Sigmoid colon (tissue), 7 donors: ENCODE measurements at regions of chr3 and their contacts with region 1.

Region 1: DNA sequence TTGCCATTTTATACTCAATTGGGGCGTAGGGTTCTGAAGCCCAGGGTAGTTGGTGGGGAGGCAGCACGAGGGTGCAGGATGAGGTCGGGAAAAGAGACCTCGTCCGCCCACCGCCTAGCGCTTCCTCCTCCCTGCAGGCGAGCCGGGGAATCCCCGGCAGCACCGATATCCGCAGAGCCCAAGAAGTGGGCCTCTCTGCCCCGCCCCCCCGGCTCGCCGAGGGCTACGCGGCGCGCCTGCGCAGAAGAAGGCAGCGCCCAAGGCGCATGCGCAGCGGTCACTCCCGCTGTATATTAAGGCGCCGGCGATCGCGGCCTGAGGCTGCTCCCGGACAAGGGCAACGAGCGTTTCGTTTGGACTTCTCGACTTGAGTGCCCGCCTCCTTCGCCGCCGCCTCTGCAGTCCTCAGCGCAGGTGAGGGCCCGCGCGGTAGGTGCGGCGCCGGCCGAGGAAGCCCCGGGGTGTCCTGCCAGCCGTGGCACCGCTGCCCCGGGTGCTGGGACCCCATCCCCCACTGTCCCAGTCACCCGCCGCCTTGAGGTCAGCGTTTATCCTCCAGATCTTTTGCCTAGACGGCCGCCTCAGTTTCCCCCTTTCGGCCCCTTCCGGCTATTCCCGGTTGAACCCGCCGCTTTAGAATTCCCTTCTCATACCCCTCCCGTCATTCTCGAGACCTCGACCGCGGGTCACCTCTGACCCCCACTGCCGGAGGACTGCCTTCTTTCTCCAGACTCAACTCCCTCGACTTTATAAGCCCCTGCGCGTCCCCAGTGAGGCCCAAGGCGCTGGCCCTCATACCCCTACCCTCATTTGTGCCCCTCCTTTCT is at the start of gene ALAS1:
- DNase-seq: peak; percentile 95
- H3K4me3 ChIP-seq: peak within 1 kb of the TSS; percentile 88 to 97 (median 91)
- H3K27ac ChIP-seq: peak within 1 kb of the TSS; percentile 86 to 90 (median 88)
- H3K4me1 ChIP-seq: peaks cover 0 to 65% (median 46%) of the 10 kb centered on the region in 4 donors
- H3K27me3 ChIP-seq: no peaks in the 10 kb centered on the region
- CTCF ChIP-seq: peak; percentile 29 to 54 (median 33)
- EP300 ChIP-seq: no peak
- POLR2A ChIP-seq: peak; percentile 58 to 88
- total RNA-seq, gene ALAS1: 23.2 to 27.3 (median 25.8) TPM

Region 2: DNA sequence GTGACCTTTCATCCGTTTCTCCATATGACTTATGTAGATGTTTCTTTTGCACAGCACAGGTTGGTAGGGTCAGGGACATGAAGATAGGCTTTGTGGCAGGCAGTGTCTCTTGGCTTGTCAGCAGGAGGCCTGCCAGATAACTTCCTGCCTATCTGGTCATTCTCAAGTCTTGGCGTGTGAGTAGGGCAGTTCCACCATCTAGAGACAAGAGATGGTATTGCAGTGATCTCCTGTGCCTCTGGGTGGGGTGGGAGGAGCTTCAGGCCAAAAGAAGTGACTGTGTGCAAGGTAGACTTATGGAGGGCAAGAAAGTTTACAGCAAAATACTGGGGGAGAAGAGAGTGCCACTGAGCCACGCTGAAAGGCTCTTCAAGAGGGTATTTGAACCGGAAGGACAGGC is 516.0 kb before region 1 on chr3:
- intact Hi-C with region 1: no loop called
- DNase-seq: peak; percentile 83
- H3K4me3 ChIP-seq: no peak overlapping the region
- H3K27ac ChIP-seq: peak overlapping the region in 2 of 4 donors; percentile 30 to 31
- H3K4me1 ChIP-seq: peaks cover 0 to 30% (median 18%) of the 10 kb centered on the region in 4 donors
- H3K27me3 ChIP-seq: no peaks in the 10 kb centered on the region
- CTCF ChIP-seq: peak; percentile 73 to 83 (median 80)
- EP300 ChIP-seq: no peak
- POLR2A ChIP-seq: no peak

Region 3: GRCh38 chr3:52154117-52155094 is 43.6 kb before region 1 on chr3 and contains the start of gene POC1A:
- intact Hi-C with region 1: loop called (anchors 2 kb)
- DNase-seq: peak; percentile 99
- H3K4me3 ChIP-seq: peak within 1 kb of the TSS; percentile 47 to 65 (median 60)
- H3K27ac ChIP-seq: peak within 1 kb of the TSS; percentile 85 to 92 (median 86)
- H3K4me1 ChIP-seq: peaks cover 0 to 17% (median 14%) of the 10 kb centered on the region in 4 donors
- H3K27me3 ChIP-seq: no peaks in the 10 kb centered on the region
- CTCF ChIP-seq: peak in 3 of 4 experiments; percentile 20 to 40 (median 36)
- EP300 ChIP-seq: peak in 1 of 4 donors; percentile 56
- POLR2A ChIP-seq: peak in 1 of 2 donors; percentile 33
- total RNA-seq, gene POC1A: 0.66 to 1.7 (median 1.2) TPM

Region 4: DNA sequence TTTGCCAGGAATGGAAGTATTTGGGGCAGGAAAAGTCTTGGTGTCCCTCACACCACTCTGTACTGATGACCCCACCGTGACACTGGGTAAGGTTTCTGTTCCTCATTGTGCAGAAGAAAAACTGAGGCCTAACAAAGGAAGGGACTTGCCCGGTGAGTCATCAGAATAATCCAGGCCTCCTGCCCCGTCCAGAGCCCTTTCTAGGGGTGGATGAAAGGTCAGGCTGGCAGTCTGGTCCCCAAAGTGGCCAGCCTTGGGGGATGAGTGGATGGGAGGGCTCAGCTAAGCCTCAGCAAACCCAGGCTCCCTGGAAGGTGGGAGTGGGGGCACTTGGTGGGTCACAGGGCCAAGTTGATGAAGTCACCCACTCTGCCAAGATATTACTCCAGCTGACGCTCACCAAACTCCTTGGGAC is 115.7 kb after region 1 on chr3:
- intact Hi-C with region 1: no loop called
- DNase-seq: no peak
- H3K4me3 ChIP-seq: no peak overlapping the region
- H3K27ac ChIP-seq: peak overlapping the region in 3 of 4 donors; percentile 27 to 49 (median 27)
- H3K4me1 ChIP-seq: peaks cover 0 to 18% (median 11%) of the 10 kb centered on the region in 4 donors
- H3K27me3 ChIP-seq: no peaks in the 10 kb centered on the region
- CTCF ChIP-seq: no peak
- EP300 ChIP-seq: no peak
- POLR2A ChIP-seq: no peak

Region 5: DNA sequence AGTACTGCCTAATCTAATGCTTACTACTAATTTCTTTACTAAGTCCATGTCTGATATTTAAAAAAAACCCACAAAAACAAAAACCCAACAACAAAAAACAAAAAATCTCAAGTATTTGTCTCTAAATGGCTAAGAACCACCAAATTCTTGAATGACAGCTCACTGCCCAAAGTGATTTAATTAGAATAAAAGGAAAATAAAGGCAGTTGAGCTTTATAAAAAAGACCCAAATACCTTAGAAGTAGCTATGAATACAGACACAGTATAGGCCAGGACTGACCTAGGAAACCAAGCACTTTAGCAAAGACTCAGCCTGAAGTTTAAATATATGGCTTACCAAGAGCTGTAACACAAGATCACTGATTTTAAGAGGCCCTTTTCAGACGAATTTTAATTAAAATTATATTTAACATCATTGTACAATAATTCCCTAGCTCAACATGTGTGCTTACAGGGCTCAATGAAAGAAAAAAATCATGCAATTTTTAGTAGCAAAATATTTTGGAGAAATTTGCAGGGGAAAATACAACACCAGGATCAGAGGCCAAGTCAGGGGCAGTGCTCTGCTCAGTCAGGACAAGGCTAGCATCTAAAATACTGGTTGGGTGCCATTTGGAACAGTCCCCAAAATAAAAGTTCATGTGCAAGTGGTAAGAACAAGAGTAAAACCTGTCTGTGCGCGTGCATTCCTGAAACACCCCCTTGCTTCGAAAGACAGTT is 363.1 kb after region 1 on chr3:
- intact Hi-C with region 1: no loop called
- DNase-seq: no peak
- H3K4me3 ChIP-seq: no peak overlapping the region
- H3K27ac ChIP-seq: no peak overlapping the region
- H3K4me1 ChIP-seq: peaks cover 0 to 16% (median 11%) of the 10 kb centered on the region in 4 donors
- H3K27me3 ChIP-seq: no peaks in the 10 kb centered on the region
- CTCF ChIP-seq: no peak
- EP300 ChIP-seq: no peak
- POLR2A ChIP-seq: no peak